Activated CD4-positive, alpha-beta T cell treated with anti-CD3 and anti-CD28 coated beads for 36 hours (primary cell): ENCODE measurements at regions of chr6 and their contacts with region 1.

Region 1: DNA sequence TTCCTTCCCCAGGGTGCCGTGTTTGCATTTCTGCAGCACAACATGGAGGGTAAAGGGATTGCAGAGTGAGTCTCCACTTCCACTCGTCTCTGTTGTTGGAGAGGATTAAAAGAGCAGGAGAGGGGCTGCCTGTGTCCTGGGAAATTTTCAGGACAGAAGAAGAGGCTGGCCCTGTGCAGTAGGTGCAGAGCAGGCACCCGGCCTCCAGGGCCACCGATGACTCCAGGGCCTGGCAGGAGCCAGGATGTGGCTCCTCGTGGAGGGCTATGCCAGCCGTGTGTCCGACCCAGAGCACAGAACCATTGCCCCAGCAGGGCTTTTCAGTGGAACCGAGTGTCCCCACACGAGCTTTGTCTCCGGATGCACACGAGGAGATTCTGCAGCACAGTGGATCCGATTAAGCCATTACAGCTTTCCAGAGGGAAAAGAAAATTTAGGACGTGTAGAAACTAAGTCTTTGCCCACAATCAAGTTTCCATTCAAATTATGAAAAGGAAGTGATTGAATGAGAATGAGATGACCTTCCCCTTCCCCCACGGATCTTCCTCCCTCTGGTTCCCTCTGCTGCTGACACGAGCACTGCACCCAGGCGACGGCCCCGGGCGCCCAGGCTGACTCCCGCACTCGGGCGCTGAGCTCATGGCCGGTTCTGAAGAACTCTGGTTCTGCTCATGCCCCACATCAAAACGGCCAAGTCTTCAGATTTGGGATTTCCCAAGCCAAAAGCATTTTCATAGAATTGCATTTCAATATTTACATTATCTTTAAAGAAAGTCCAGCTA is 43.1 kb upstream of the UNC93A start:
- DNase-seq: no peak
- ATAC-seq: no peak
- H3K4me3 Mint-ChIP-seq: no peak overlapping the region
- H3K27ac Mint-ChIP-seq: no peak overlapping the region
- H3K4me1 Mint-ChIP-seq: no peaks in the 10 kb centered on the region
- H3K27me3 Mint-ChIP-seq: peaks cover 2% of the 10 kb centered on the region

Region 2: GRCh38 chr6:166707045-166707444 is 541.0 kb before region 1 on chr6:
- CTCF ChIA-PET with region 1: no interaction called
- POLR2A ChIA-PET with region 1: no interaction called
- intact Hi-C with region 1: no loop called
- DNase-seq: peak; percentile 60
- ATAC-seq: peak; percentile 75
- H3K4me3 Mint-ChIP-seq: no peak overlapping the region
- H3K27ac Mint-ChIP-seq: no peak overlapping the region
- H3K4me1 Mint-ChIP-seq: no peaks in the 10 kb centered on the region
- H3K27me3 Mint-ChIP-seq: no peaks in the 10 kb centered on the region

Region 3: DNA sequence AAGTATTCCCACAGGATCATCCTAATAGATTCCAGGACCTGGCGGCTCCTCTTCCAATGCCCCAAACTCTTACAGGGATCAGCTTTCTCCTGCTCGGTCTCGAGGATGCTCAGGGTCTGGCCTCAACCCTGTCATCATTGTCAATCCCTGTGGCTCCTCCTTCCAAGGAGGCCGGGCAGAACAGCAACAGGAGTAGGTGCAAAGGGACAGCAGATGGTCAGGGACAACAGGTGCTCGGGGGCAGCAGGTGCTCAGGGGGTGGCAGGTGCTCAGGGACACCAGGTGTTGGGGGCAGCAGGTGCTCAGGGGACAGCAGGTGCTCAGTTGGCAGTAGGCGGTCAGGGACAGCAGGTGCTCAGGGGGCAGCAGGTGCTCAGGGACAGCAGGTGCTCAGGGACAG is 161.7 kb after region 1 on chr6:
- CTCF ChIA-PET with region 1: no interaction called
- POLR2A ChIA-PET with region 1: no interaction called
- intact Hi-C with region 1: loop called in 1 of 2 experiments (anchors 2 kb)
- DNase-seq: no peak
- ATAC-seq: no peak
- H3K4me3 Mint-ChIP-seq: no peak overlapping the region
- H3K27ac Mint-ChIP-seq: no peak overlapping the region
- H3K4me1 Mint-ChIP-seq: no peaks in the 10 kb centered on the region
- H3K27me3 Mint-ChIP-seq: peaks cover 3% of the 10 kb centered on the region